ENCODE measurements at regions of chr10 and their contacts with region 1.

Region 1: GRCh38 chr10:118002581-118002980 is 44.2 kb downstream of the RAB11FIP2 start:
- DNase-seq: peak; percentile 29
- H3K4me3 Mint-ChIP-seq: no peak overlapping the region
- H3K27ac Mint-ChIP-seq: peak overlapping the region; percentile 42
- H3K4me1 Mint-ChIP-seq: peaks cover 8% of the 10 kb centered on the region
- H3K27me3 Mint-ChIP-seq: no peaks in the 10 kb centered on the region

Region 2: GRCh38 chr10:118028619-118029018 is 26.0 kb after region 1 on chr10:
- CTCF ChIA-PET with region 1: no interaction called
- POLR2A ChIA-PET with region 1: no interaction called
- intact Hi-C with region 1: no loop called
- DNase-seq: no peak
- H3K4me3 Mint-ChIP-seq: no peak overlapping the region
- H3K27ac Mint-ChIP-seq: no peak overlapping the region
- H3K4me1 Mint-ChIP-seq: peaks cover 11% of the 10 kb centered on the region
- H3K27me3 Mint-ChIP-seq: no peaks in the 10 kb centered on the region

Region 3: DNA sequence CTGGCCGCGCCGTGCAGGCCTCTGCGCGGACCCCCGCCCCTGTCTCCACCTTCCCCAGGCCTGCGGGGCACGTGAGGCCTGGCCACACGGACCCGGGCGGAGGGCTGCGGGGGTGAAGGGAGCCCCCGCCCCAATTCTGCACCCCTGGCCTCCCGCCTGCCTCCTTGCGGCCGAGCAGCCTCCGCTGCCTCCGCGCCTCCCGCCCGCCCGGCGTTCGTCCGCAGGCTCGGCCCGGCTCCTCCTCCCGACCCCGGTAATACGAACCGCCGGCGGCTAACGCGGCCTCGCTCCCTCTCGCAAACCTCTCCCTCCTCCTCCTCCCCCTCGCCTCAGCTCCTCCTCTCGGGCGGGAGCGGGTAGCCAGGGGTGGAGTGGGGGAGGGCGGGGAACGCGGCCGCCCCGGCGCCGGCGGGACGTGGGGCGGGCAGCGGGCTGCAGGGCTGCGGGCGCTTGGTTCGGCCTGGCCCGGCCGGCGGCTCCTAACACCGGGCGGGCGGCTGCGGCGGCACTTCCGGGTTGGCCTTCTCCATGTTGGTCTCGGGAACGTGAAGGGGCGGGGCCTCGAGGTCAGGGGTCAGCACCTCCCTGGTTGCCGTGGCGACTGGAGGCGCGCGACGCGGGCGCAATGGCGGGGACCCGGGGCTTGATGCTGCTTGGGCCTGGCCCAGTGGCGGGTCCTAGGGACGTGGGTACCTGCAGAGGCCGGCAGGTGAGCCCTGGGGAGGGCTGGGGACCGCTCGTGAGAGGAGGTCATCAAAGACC is 44.0 kb after region 1 on chr10 and contains the start of gene RAB11FIP2:
- CTCF ChIA-PET with region 1: no interaction called
- POLR2A ChIA-PET with region 1: no interaction called
- intact Hi-C with region 1: loop called (anchors 5 kb)
- DNase-seq: peak; percentile 96
- H3K4me3 Mint-ChIP-seq: peak within 1 kb of the TSS; percentile 89
- H3K27ac Mint-ChIP-seq: peak within 1 kb of the TSS; percentile 56
- H3K4me1 Mint-ChIP-seq: peaks cover 36% of the 10 kb centered on the region
- H3K27me3 Mint-ChIP-seq: no peaks in the 10 kb centered on the region
- total RNA-seq, gene RAB11FIP2: 7.5 to 9.4 TPM

Region 4: DNA sequence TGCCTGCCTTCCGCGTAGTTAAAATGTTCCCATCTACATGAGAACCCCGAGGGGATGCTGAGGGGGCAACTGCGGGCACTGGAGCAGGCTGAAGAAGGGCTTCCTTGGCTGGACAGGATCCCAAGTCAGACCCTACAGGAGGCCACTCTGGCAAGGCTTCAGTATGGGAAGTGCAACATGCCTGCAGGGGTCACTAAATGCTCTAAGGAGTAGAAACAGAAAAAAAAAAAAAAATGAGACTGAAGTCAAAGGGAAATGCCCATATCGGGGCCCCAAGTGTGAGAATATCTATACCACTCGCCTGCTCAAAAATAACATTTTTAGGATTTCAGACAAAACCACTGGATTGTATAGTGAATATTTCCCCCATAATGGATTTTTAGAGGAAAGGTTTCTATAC is 306.1 kb after region 1 on chr10:
- CTCF ChIA-PET with region 1: no interaction called
- POLR2A ChIA-PET with region 1: no interaction called
- intact Hi-C with region 1: no loop called
- DNase-seq: no peak
- H3K4me3 Mint-ChIP-seq: no peak overlapping the region
- H3K27ac Mint-ChIP-seq: no peak overlapping the region
- H3K4me1 Mint-ChIP-seq: no peaks in the 10 kb centered on the region
- H3K27me3 Mint-ChIP-seq: no peaks in the 10 kb centered on the region